ENCODE measurements at regions of chr15 and their contacts with region 1.

Region 1: GRCh38 chr15:67116742-67117141 is 51.3 kb downstream of the SMAD3 start:
- DNase-seq: peak; percentile 58 to 64
- H3K4me3 ChIP-seq: no peak overlapping the region
- H3K4me3 Mint-ChIP-seq: peak overlapping the region; percentile 31
- H3K27ac Mint-ChIP-seq: peak overlapping the region; percentile 46
- H3K4me1 ChIP-seq: peaks cover 70% of the 10 kb centered on the region
- H3K4me1 Mint-ChIP-seq: peaks cover 61% of the 10 kb centered on the region
- H3K27me3 ChIP-seq: no peaks in the 10 kb centered on the region
- H3K27me3 Mint-ChIP-seq: no peaks in the 10 kb centered on the region
- CTCF ChIP-seq: no peak

Region 2: DNA sequence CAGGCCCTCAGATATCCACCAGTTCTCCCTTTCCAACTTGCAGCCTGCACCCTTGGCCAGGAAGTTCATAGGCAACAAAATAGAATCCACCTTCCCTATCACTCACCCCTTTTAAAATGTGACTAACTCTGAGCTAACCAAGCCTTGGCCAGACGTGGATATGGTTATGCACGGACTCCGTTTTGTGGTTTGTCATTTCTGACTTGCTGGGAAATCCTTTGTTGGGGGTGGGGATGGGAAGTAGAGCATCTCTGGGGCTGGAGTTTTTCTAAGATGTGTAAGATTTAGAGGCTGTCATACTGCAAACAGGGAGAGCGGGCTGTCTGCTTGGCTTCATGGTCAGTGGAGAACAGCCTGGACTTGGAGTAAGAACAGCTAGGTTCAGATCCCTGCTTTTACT is 11.2 kb after region 1 on chr15:
- CTCF ChIA-PET with region 1: no interaction called
- POLR2A ChIA-PET with region 1: no interaction called
- intact Hi-C with region 1: loop called (anchors 1 kb)
- DNase-seq: no peak
- H3K4me3 ChIP-seq: no peak overlapping the region
- H3K4me3 Mint-ChIP-seq: no peak overlapping the region
- H3K27ac Mint-ChIP-seq: no peak overlapping the region
- H3K4me1 ChIP-seq: peaks cover 51% of the 10 kb centered on the region
- H3K4me1 Mint-ChIP-seq: peaks cover 26% of the 10 kb centered on the region
- H3K27me3 ChIP-seq: no peaks in the 10 kb centered on the region
- H3K27me3 Mint-ChIP-seq: no peaks in the 10 kb centered on the region
- CTCF ChIP-seq: no peak

Measured in Caco-2 (cell line).